ENCODE measurements at regions of chr4 and their contacts with region 1.

Region 1: GRCh38 chr4:152591396-152591795 is 55.5 kb upstream of the FBXW7 start:
- DNase-seq: no peak
- ATAC-seq: peak; percentile 42
- H3K4me3 Mint-ChIP-seq: no peak overlapping the region
- H3K27ac Mint-ChIP-seq: no peak overlapping the region
- H3K4me1 Mint-ChIP-seq: peaks cover 17% of the 10 kb centered on the region
- H3K27me3 Mint-ChIP-seq: peaks cover 4% of the 10 kb centered on the region
- CTCF ChIP-seq: no peak

Region 2: DNA sequence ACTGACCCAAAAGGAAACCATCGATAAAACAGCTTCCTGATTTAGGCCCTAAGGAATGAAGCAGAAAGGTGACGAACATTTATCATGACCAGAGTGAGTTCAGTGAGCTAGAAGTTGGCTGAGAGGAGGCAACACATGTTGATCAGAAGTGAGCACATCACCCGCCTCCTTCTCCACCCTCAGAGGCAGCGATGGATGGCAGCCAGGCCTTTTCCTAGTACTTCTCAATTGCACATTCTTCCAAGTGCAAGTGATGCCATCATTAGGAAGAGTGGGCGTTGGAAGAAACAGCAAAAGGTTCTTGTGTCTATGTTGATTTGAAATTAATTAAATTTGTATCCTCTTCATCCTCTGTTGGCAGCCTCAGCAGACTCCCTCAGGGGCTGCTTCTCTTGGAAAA is 36.7 kb after region 1 on chr4:
- CTCF ChIA-PET with region 1: no interaction called
- POLR2A ChIA-PET with region 1: no interaction called
- intact Hi-C with region 1: loop called (anchors 5 kb)
- DNase-seq: no peak
- ATAC-seq: no peak
- H3K4me3 Mint-ChIP-seq: no peak overlapping the region
- H3K27ac Mint-ChIP-seq: no peak overlapping the region
- H3K4me1 Mint-ChIP-seq: no peaks in the 10 kb centered on the region
- H3K27me3 Mint-ChIP-seq: no peaks in the 10 kb centered on the region
- CTCF ChIP-seq: no peak

Region 3: GRCh38 chr4:152729466-152729865 is 138.1 kb after region 1 on chr4:
- CTCF ChIA-PET with region 1: no interaction called
- POLR2A ChIA-PET with region 1: no interaction called
- intact Hi-C with region 1: no loop called
- DNase-seq: no peak
- ATAC-seq: no peak
- H3K4me3 Mint-ChIP-seq: no peak overlapping the region
- H3K27ac Mint-ChIP-seq: no peak overlapping the region
- H3K4me1 Mint-ChIP-seq: peaks cover 15% of the 10 kb centered on the region
- H3K27me3 Mint-ChIP-seq: no peaks in the 10 kb centered on the region
- CTCF ChIP-seq: no peak

Measured in activated B cell treated with CpG ODN at 0.5 μM for 24 hours (primary cell).